ENCODE measurements at regions of chr1 and their contacts with region 1.

Region 1: DNA sequence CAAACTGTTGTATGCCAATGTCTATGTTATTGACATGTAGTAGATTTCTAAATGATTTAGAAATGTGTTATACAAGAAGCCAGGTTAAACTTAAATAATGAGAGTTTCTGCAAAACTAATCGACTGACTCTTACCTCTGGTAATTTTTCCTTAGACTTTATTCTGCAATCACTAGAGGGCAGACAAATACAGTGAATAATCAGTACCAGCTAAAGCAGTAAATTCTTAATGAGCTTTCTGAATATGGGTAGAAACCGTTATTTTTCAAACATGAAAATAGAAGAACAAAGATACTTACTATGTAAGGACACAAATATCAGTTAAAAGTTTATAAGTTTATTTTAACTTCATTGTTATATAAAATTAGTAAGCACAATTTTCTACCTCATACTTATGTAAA is 97.9 kb upstream of the RGS1 start:
- DNase-seq: peak in 1 of 35 experiments; percentile 66
- ATAC-seq: peak in 3 of 4 experiments; percentile 40 to 81 (median 43)
- H3K4me3 ChIP-seq: no peak overlapping the region
- H3K4me3 Mint-ChIP-seq: no peak overlapping the region
- H3K27ac ChIP-seq: no peak overlapping the region
- H3K27ac Mint-ChIP-seq: no peak overlapping the region
- H3K4me1 ChIP-seq: no peaks in the 10 kb centered on the region
- H3K4me1 Mint-ChIP-seq: no peaks in the 10 kb centered on the region
- H3K27me3 ChIP-seq: peaks cover 0 to 4% of the 10 kb centered on the region in 2 experiments
- H3K27me3 Mint-ChIP-seq: peaks cover 0 to 5% of the 10 kb centered on the region in 2 donors

Region 2: GRCh38 chr1:192401825-192402224 is 75.8 kb before region 1 on chr1:
- CTCF ChIA-PET with region 1: no interaction called
- POLR2A ChIA-PET with region 1: no interaction called
- DNase-seq: no peak
- ATAC-seq: no peak
- H3K4me3 ChIP-seq: no peak overlapping the region
- H3K4me3 Mint-ChIP-seq: no peak overlapping the region
- H3K27ac ChIP-seq: no peak overlapping the region
- H3K27ac Mint-ChIP-seq: no peak overlapping the region
- H3K4me1 ChIP-seq: no peaks in the 10 kb centered on the region
- H3K4me1 Mint-ChIP-seq: no peaks in the 10 kb centered on the region
- H3K27me3 ChIP-seq: no peaks in the 10 kb centered on the region
- H3K27me3 Mint-ChIP-seq: no peaks in the 10 kb centered on the region

Region 3: DNA sequence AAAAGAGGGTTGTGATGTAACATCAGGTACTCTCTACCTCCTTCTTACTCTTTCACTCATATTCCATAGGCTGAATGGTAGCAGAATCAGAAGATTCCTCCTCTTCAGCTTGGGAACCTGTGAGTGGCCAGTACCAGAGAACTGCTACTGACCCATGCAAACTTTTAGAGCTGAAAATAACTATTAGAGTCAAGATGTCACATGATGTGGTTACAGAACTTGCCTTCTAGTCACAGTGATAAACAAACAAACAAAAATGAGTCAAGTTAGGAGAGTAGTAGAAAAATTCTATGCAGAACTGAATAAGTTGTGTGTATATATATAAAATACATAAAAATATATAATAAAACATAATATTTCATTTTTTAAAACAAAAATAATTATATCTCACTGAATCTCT is 50.3 kb after region 1 on chr1:
- CTCF ChIA-PET with region 1: no interaction called
- POLR2A ChIA-PET with region 1: no interaction called
- DNase-seq: no peak
- ATAC-seq: no peak
- H3K4me3 ChIP-seq: no peak overlapping the region
- H3K4me3 Mint-ChIP-seq: no peak overlapping the region
- H3K27ac ChIP-seq: no peak overlapping the region
- H3K27ac Mint-ChIP-seq: no peak overlapping the region
- H3K4me1 ChIP-seq: peaks cover 0 to 4% of the 10 kb centered on the region in 2 experiments
- H3K4me1 Mint-ChIP-seq: peaks cover 21 to 36% (median 28%) of the 10 kb centered on the region in 3 donors
- H3K27me3 ChIP-seq: no peaks in the 10 kb centered on the region
- H3K27me3 Mint-ChIP-seq: no peaks in the 10 kb centered on the region

Region 4: GRCh38 chr1:192539297-192540092 is 61.9 kb after region 1 on chr1:
- CTCF ChIA-PET with region 1: interaction called, 8 to 12 read pairs
- POLR2A ChIA-PET with region 1: no interaction called
- DNase-seq: peak in 2 of 35 experiments; percentile 24 to 37
- ATAC-seq: peak in 2 of 4 experiments; percentile 33 to 39
- H3K4me3 ChIP-seq: no peak overlapping the region
- H3K4me3 Mint-ChIP-seq: peak overlapping the region; percentile 10 to 49 (median 39)
- H3K27ac ChIP-seq: peak overlapping the region; percentile 72
- H3K27ac Mint-ChIP-seq: peak overlapping the region; percentile 88 to 94
- H3K4me1 ChIP-seq: peaks cover 8 to 10% of the 10 kb centered on the region in 2 experiments
- H3K4me1 Mint-ChIP-seq: peaks cover 30 to 62% (median 33%) of the 10 kb centered on the region in 3 donors
- H3K27me3 ChIP-seq: no peaks in the 10 kb centered on the region
- H3K27me3 Mint-ChIP-seq: no peaks in the 10 kb centered on the region

Region 5: DNA sequence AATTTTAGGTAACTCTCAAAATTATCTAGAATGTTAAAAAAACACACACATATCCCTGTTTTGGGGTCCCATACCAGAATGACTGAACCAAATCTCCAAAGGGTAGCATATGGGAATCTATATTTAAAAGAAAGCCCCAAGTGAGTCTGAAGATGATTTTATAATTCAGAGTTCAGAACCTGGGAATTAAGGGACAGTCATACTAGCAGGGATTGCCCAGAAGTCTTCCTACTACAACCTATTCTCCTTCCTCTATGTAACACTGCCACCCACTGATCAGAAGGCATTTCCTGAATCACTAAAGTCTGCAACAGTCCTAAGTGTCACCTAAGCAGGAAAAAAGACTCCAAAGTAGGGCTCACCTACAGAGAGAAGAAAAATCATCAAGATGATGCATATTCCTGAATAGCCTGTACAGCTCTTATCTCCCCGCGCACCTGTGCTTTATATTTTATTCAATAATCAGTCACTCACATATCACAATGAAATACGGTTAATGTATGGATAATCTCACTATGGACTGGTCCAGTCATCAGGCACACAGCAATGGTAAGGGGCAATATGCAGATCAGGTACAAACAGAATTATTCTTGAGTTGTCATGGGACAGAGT is 102.8 kb after region 1 on chr1:
- CTCF ChIA-PET with region 1: interaction called, 13 to 28 read pairs
- POLR2A ChIA-PET with region 1: interaction called in 1 of 2 experiments, 4 read pairs
- DNase-seq: peak in 7 of 35 experiments; percentile 4 to 68 (median 7)
- ATAC-seq: peak; percentile 29 to 44 (median 38)
- H3K4me3 ChIP-seq: no peak overlapping the region
- H3K4me3 Mint-ChIP-seq: peak overlapping the region in 2 of 3 donors; percentile 35 to 61
- H3K27ac ChIP-seq: no peak overlapping the region
- H3K27ac Mint-ChIP-seq: peak overlapping the region in 1 of 2 donors; percentile 57
- H3K4me1 ChIP-seq: peaks cover 4 to 36% of the 10 kb centered on the region in 2 experiments
- H3K4me1 Mint-ChIP-seq: peaks cover 33 to 48% (median 46%) of the 10 kb centered on the region in 3 donors
- H3K27me3 ChIP-seq: no peaks in the 10 kb centered on the region
- H3K27me3 Mint-ChIP-seq: peaks cover 1 to 6% of the 10 kb centered on the region in 2 donors

Region 6: GRCh38 chr1:192615055-192615454 is 137.4 kb after region 1 on chr1:
- CTCF ChIA-PET with region 1: interaction called, 59 to 67 read pairs
- POLR2A ChIA-PET with region 1: interaction called in 1 of 2 experiments, 5 read pairs
- DNase-seq: no peak
- ATAC-seq: no peak
- H3K4me3 ChIP-seq: no peak overlapping the region
- H3K4me3 Mint-ChIP-seq: no peak overlapping the region
- H3K27ac ChIP-seq: no peak overlapping the region
- H3K27ac Mint-ChIP-seq: no peak overlapping the region
- H3K4me1 ChIP-seq: no peaks in the 10 kb centered on the region
- H3K4me1 Mint-ChIP-seq: no peaks in the 10 kb centered on the region
- H3K27me3 ChIP-seq: no peaks in the 10 kb centered on the region
- H3K27me3 Mint-ChIP-seq: no peaks in the 10 kb centered on the region

Region 7: DNA sequence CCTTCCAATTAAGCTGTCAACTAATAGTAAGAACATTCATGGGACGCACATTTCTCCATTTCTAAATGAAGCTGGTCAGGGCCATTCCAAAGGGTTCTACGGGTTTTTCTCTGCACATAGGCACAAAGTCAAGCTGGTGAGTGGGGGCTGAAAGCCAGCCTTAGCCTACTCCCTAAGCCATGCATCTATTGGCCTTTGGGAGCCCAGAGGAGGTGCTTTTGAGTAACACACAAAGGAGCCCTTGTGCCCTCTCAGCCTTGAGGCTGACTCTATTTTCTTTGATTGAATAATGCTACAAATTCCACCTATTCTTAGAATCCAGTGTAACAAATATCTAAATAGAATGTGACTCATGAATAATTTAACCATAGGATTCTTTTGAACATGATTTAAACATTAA is 231.9 kb after region 1 on chr1:
- CTCF ChIA-PET with region 1: no interaction called
- POLR2A ChIA-PET with region 1: no interaction called
- DNase-seq: no peak
- ATAC-seq: no peak
- H3K4me3 ChIP-seq: no peak overlapping the region
- H3K4me3 Mint-ChIP-seq: no peak overlapping the region
- H3K27ac ChIP-seq: no peak overlapping the region
- H3K27ac Mint-ChIP-seq: no peak overlapping the region
- H3K4me1 ChIP-seq: no peaks in the 10 kb centered on the region
- H3K4me1 Mint-ChIP-seq: no peaks in the 10 kb centered on the region
- H3K27me3 ChIP-seq: peaks cover 0 to 7% of the 10 kb centered on the region in 2 experiments
- H3K27me3 Mint-ChIP-seq: peaks cover 3 to 6% of the 10 kb centered on the region in 2 donors

Region 8: GRCh38 chr1:193019442-193020026 is 541.9 kb after region 1 on chr1:
- CTCF ChIA-PET with region 1: interaction called, 14 to 33 read pairs
- POLR2A ChIA-PET with region 1: no interaction called
- DNase-seq: peak in 2 of 35 experiments; percentile 5 to 61
- ATAC-seq: peak in 2 of 4 experiments; percentile 37 to 43
- H3K4me3 ChIP-seq: no peak overlapping the region
- H3K4me3 Mint-ChIP-seq: no peak overlapping the region
- H3K27ac ChIP-seq: no peak overlapping the region
- H3K27ac Mint-ChIP-seq: no peak overlapping the region
- H3K4me1 ChIP-seq: no peaks in the 10 kb centered on the region
- H3K4me1 Mint-ChIP-seq: peaks cover 0 to 2% (median 0%) of the 10 kb centered on the region in 3 donors
- H3K27me3 ChIP-seq: no peaks in the 10 kb centered on the region
- H3K27me3 Mint-ChIP-seq: no peaks in the 10 kb centered on the region

Region 9: GRCh38 chr1:194410756-194411155 is 1933.1 kb after region 1 on chr1:
- CTCF ChIA-PET with region 1: no interaction called
- POLR2A ChIA-PET with region 1: no interaction called
- DNase-seq: no peak
- ATAC-seq: no peak
- H3K4me3 ChIP-seq: no peak overlapping the region
- H3K4me3 Mint-ChIP-seq: no peak overlapping the region
- H3K27ac ChIP-seq: no peak overlapping the region
- H3K27ac Mint-ChIP-seq: no peak overlapping the region
- H3K4me1 ChIP-seq: no peaks in the 10 kb centered on the region
- H3K4me1 Mint-ChIP-seq: no peaks in the 10 kb centered on the region
- H3K27me3 ChIP-seq: no peaks in the 10 kb centered on the region
- H3K27me3 Mint-ChIP-seq: no peaks in the 10 kb centered on the region

Measured in T-cell (primary cell).